ENCODE measurements at regions of chr16 and their contacts with region 1.

Region 1: DNA sequence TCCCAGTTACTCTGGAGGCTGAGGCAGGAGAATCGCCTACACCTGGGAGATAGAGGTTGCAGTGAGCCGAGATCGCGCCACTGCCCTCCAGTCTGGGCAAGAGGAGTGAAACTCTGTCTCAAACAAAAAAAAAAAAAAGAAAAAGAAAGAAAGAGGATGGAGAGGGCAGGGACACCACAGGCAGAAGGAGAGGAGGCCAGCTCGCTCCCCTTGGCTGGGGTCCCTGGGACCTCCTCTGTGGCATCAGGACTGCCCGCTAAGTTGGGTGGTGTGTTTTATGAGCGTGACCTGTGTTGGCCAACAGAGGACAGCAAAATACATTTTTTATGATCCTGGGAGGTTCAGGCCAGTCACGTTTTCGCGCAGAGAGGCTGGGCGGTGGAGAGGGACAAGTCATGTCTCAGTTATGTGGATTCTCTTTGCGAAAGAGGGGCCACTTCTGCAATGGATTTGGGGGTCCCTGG is 229.6 kb downstream of the MRTFB start:
- DNase-seq: peak; percentile 76
- ATAC-seq: peak; percentile 79

Region 2: GRCh38 chr16:12925026-12925800 is 1375.5 kb before region 1 on chr16:
- intact Hi-C with region 1: no loop called
- DNase-seq: no peak
- ATAC-seq: no peak

Region 3: GRCh38 chr16:14399378-14400284 is 98.9 kb after region 1 on chr16:
- intact Hi-C with region 1: loop called (anchors 10 kb)
- DNase-seq: peak; percentile 54
- ATAC-seq: peak; percentile 94

Region 4: GRCh38 chr16:14486520-14487303 is 186.0 kb after region 1 on chr16:
- intact Hi-C with region 1: loop called (anchors 10 kb)
- DNase-seq: peak; percentile 84
- ATAC-seq: peak; percentile 90

Region 5: GRCh38 chr16:14529010-14529669 is 228.4 kb after region 1 on chr16:
- intact Hi-C with region 1: loop called (anchors 2 kb)
- DNase-seq: peak; percentile 54
- ATAC-seq: peak; percentile 88